Panc1 (cell line): ENCODE measurements at regions of chr12 and their contacts with region 1.

Region 1: DNA sequence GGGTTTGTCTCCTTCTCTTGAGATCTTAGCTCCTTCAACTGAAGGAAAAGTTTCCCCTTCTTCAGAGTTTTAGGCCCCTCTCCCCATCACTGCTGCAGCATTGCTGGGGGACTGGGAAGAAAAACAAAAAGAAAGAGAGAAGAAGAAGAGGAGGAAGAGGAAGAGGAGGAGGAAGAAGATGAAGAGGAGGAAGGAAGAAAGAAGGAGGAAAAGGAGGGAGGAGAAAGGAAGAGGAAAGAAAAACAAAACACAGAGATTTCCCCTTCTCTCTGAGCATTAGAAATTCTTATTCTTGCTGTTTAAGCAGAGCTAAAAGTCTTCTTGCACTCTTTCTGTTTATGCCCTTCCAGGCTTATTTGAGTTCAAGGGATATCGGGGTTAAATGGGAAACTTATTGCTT is 219.8 kb upstream of the AMIGO2 start:
- DNase-seq: no peak
- ATAC-seq: no peak
- H3K4me3 ChIP-seq: no peak overlapping the region
- H3K27ac ChIP-seq: no peak overlapping the region
- H3K4me1 ChIP-seq: no peaks in the 10 kb centered on the region
- H3K27me3 ChIP-seq: no peaks in the 10 kb centered on the region
- CTCF ChIP-seq: no peak

Region 2: DNA sequence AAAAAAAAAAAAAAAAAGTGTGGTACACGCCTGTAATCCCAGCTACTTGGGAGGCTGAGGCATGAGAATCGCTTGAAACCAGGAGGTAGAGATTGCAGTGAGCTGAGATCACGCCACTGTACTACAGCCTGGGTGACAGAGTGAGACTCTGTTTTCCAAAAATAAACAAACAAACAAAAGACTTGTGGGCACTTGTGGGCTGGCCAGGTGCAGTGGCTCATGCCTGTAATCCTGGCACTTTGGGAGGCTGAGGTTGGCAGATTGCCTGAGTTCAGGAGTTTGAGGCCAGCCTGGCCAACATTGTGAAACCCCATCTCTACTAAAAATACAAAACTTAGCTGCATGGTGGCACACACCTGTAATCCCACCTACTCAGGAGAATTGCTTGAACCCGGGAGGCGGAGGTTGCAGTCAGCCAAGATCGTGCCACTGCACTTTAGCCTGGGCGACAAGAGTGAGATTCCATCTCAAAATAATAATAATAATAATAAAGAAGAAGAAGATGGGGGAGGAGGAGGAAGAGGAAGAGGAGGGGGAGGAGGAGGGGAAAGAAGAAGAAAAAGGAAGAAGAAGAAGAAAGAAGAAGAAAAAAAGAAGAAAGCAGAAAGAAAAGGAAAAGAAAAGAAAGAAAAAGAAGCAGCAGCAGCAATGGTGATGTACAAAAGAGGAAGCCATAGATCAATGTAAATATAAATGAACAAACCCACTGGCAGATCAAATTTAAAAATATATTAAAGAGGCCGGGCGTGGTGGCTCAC is 1444.8 kb after region 1 on chr12:
- CTCF ChIA-PET with region 1: no interaction called
- POLR2A ChIA-PET with region 1: interaction called, 15 read pairs
- in situ Hi-C with region 1: no loop called
- intact Hi-C with region 1: no loop called
- DNase-seq: no peak
- ATAC-seq: no peak
- H3K4me3 ChIP-seq: no peak overlapping the region
- H3K27ac ChIP-seq: no peak overlapping the region
- H3K4me1 ChIP-seq: no peaks in the 10 kb centered on the region
- H3K27me3 ChIP-seq: peaks cover 4% of the 10 kb centered on the region
- CTCF ChIP-seq: no peak